CD4-positive, alpha-beta T cell (primary cell): ENCODE measurements at regions of chr1 and their contacts with region 1.

Region 1: DNA sequence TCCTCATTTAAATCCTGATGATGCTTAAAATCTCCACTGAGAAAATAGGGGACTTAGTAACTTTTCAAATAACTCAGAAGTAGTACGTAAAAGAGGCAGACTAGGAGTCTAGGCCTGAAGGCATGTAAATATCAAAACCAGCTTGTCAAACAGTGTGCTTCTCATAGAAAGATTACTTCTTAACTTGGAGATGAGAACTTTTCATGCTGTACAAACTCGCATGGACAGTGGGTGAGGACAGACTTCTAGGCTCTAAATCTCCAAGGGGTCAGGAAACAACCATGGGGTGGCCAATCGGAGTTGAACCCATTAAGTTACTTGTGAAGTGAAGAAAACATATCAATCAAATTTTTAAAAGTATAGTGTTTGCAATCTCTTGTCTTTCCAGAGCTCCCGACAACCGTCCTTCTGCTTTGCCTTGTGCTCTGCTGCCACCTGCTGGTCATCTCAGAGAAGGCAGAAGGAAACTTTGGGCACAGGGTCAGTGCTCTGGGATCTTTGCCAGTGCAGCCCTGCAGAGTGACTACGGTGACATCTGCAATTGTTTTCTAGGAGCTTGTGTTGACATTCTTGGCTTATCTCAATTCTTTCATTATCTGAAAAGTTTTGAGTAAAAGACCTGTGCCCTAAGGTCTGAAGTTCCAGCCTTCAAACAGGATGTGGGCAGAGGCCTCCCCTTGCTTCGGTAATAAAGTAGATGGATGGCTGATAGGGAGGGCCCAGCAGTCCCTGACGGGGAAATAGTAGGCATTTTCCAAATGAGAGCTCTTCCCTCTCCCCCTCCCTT is 105.1 kb upstream of the PDE4B start:
- DNase-seq: peak; percentile 58 to 83 (median 71)
- ATAC-seq: peak; percentile 82
- H3K4me3 ChIP-seq: no peak overlapping the region
- H3K4me3 Mint-ChIP-seq: no peak overlapping the region
- H3K27ac ChIP-seq: no peak overlapping the region
- H3K27ac Mint-ChIP-seq: no peak overlapping the region
- H3K4me1 ChIP-seq: peaks cover 7% of the 10 kb centered on the region
- H3K4me1 Mint-ChIP-seq: peaks cover 10% of the 10 kb centered on the region
- H3K27me3 ChIP-seq: no peaks in the 10 kb centered on the region
- H3K27me3 Mint-ChIP-seq: peaks cover 20% of the 10 kb centered on the region
- CTCF ChIP-seq: peak; percentile 97

Region 2: GRCh38 chr1:64686828-64687724 is 1000.5 kb before region 1 on chr1:
- CTCF ChIA-PET with region 1: no interaction called
- POLR2A ChIA-PET with region 1: no interaction called
- intact Hi-C with region 1: loop called (anchors 2 to 5 kb)
- DNase-seq: peak in 8 of 14 experiments; percentile 2 to 67 (median 30)
- ATAC-seq: peak; percentile 90
- H3K4me3 ChIP-seq: no peak overlapping the region
- H3K4me3 Mint-ChIP-seq: no peak overlapping the region
- H3K27ac ChIP-seq: no peak overlapping the region
- H3K27ac Mint-ChIP-seq: no peak overlapping the region
- H3K4me1 ChIP-seq: no peaks in the 10 kb centered on the region
- H3K4me1 Mint-ChIP-seq: no peaks in the 10 kb centered on the region
- H3K27me3 ChIP-seq: no peaks in the 10 kb centered on the region
- H3K27me3 Mint-ChIP-seq: no peaks in the 10 kb centered on the region
- CTCF ChIP-seq: peak; percentile 77

Region 3: GRCh38 chr1:65075123-65075976 is 612.3 kb before region 1 on chr1:
- CTCF ChIA-PET with region 1: no interaction called
- POLR2A ChIA-PET with region 1: no interaction called
- intact Hi-C with region 1: loop called in 1 of 2 experiments (anchors 5 kb)
- DNase-seq: peak; percentile 36 to 89 (median 57)
- ATAC-seq: peak; percentile 99
- H3K4me3 ChIP-seq: no peak overlapping the region
- H3K4me3 Mint-ChIP-seq: no peak overlapping the region
- H3K27ac ChIP-seq: no peak overlapping the region
- H3K27ac Mint-ChIP-seq: no peak overlapping the region
- H3K4me1 ChIP-seq: no peaks in the 10 kb centered on the region
- H3K4me1 Mint-ChIP-seq: peaks cover 21% of the 10 kb centered on the region
- H3K27me3 ChIP-seq: no peaks in the 10 kb centered on the region
- H3K27me3 Mint-ChIP-seq: no peaks in the 10 kb centered on the region
- CTCF ChIP-seq: peak; percentile 83

Region 4: GRCh38 chr1:65235867-65236805 is 451.5 kb before region 1 on chr1:
- CTCF ChIA-PET with region 1: interaction called, 5 read pairs
- POLR2A ChIA-PET with region 1: no interaction called
- intact Hi-C with region 1: loop called (anchors 1 to 2 kb)
- DNase-seq: peak in 3 of 14 experiments; percentile 46 to 60 (median 49)
- ATAC-seq: no peak
- H3K4me3 ChIP-seq: no peak overlapping the region
- H3K4me3 Mint-ChIP-seq: no peak overlapping the region
- H3K27ac ChIP-seq: no peak overlapping the region
- H3K27ac Mint-ChIP-seq: no peak overlapping the region
- H3K4me1 ChIP-seq: no peaks in the 10 kb centered on the region
- H3K4me1 Mint-ChIP-seq: no peaks in the 10 kb centered on the region
- H3K27me3 ChIP-seq: no peaks in the 10 kb centered on the region
- H3K27me3 Mint-ChIP-seq: peaks cover 29% of the 10 kb centered on the region
- CTCF ChIP-seq: peak; percentile 17

Region 5: DNA sequence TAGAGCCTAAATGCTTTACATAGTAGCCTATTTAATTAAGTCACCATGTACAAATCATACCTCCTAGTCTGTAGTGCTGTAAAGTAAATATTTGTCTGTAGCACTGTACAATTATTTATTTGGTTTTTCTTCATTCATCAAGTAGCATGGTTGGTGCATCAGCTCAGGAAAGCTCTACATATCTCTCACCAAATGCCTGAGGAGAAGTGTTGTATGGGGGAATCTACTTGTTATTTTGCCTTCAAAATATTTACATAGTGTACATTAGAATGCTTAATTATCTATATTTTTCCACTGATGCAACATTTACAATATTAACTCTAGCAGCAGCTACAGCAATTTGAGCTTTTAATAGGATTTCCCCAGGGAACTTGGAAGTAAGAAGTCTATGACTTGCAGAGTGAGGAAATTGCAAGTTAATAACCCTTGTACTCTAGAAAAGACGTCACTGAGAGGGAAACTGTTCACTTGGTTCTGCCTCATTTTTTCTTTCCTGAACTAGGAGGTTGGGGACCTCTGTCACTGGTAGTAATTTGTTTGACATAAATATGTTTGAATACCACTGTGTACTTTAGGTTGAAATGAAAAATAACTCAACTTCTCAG is 312.5 kb after region 1 on chr1:
- CTCF ChIA-PET with region 1: no interaction called
- POLR2A ChIA-PET with region 1: no interaction called
- intact Hi-C with region 1: no loop called
- DNase-seq: no peak
- ATAC-seq: no peak
- H3K4me3 ChIP-seq: no peak overlapping the region
- H3K4me3 Mint-ChIP-seq: no peak overlapping the region
- H3K27ac ChIP-seq: no peak overlapping the region
- H3K27ac Mint-ChIP-seq: no peak overlapping the region
- H3K4me1 ChIP-seq: no peaks in the 10 kb centered on the region
- H3K4me1 Mint-ChIP-seq: no peaks in the 10 kb centered on the region
- H3K27me3 ChIP-seq: no peaks in the 10 kb centered on the region
- H3K27me3 Mint-ChIP-seq: peaks cover 25% of the 10 kb centered on the region
- CTCF ChIP-seq: no peak

Region 6: DNA sequence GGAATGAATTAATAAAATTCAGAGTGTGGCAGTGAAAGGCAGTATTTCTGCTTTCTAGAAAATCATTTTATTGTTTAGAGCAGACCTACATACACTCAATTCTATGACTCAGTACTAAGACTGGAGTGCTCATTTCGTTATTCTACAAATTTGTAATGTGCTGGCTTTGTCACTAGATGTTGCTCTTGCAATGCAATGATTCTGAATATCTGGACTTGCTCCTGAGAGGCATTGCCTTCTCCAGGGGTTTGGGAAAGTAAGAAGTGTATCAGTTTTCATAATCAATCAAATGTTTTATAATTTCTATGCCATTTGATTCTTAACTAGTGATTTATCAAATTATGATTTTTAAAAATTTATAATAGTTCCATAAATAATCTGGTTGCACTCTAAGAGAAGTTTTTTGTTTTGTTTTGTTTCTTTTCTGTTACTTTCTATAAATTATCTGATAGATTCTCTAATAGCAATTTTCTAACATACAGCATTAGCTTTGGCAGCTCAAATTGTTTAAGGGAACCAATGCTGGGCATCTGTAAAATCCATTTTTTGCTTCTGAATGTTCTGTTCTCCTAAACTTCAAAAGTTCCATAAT is 565.8 kb after region 1 on chr1:
- CTCF ChIA-PET with region 1: no interaction called
- POLR2A ChIA-PET with region 1: no interaction called
- intact Hi-C with region 1: loop called in 1 of 2 experiments (anchors 10 kb)
- DNase-seq: peak in 4 of 14 experiments; percentile 30 to 75 (median 69)
- ATAC-seq: peak; percentile 65
- H3K4me3 ChIP-seq: no peak overlapping the region
- H3K4me3 Mint-ChIP-seq: no peak overlapping the region
- H3K27ac ChIP-seq: no peak overlapping the region
- H3K27ac Mint-ChIP-seq: no peak overlapping the region
- H3K4me1 ChIP-seq: peaks cover 3% of the 10 kb centered on the region
- H3K4me1 Mint-ChIP-seq: peaks cover 15% of the 10 kb centered on the region
- H3K27me3 ChIP-seq: no peaks in the 10 kb centered on the region
- H3K27me3 Mint-ChIP-seq: no peaks in the 10 kb centered on the region
- CTCF ChIP-seq: peak; percentile 94

Region 7: GRCh38 chr1:66618390-66618789 is 930.8 kb after region 1 on chr1:
- CTCF ChIA-PET with region 1: no interaction called
- POLR2A ChIA-PET with region 1: no interaction called
- intact Hi-C with region 1: no loop called
- DNase-seq: no peak
- ATAC-seq: no peak
- H3K4me3 ChIP-seq: no peak overlapping the region
- H3K4me3 Mint-ChIP-seq: no peak overlapping the region
- H3K27ac ChIP-seq: no peak overlapping the region
- H3K27ac Mint-ChIP-seq: no peak overlapping the region
- H3K4me1 ChIP-seq: no peaks in the 10 kb centered on the region
- H3K4me1 Mint-ChIP-seq: no peaks in the 10 kb centered on the region
- H3K27me3 ChIP-seq: no peaks in the 10 kb centered on the region
- H3K27me3 Mint-ChIP-seq: peaks cover 6% of the 10 kb centered on the region
- CTCF ChIP-seq: no peak